ENCODE measurements at regions of chr17 and their contacts with region 1.

Region 1: GRCh38 chr17:67221062-67221998 is 23.7 kb downstream of the HELZ start:
- DNase-seq: peak; percentile 67
- ATAC-seq: peak; percentile 78
- H3K4me3 Mint-ChIP-seq: no peak overlapping the region
- H3K27ac Mint-ChIP-seq: no peak overlapping the region
- H3K4me1 Mint-ChIP-seq: peaks cover 12% of the 10 kb centered on the region
- H3K27me3 Mint-ChIP-seq: no peaks in the 10 kb centered on the region

Region 2: GRCh38 chr17:67157732-67158639 is 63.3 kb before region 1 on chr17:
- CTCF ChIA-PET with region 1: no interaction called
- POLR2A ChIA-PET with region 1: no interaction called
- DNase-seq: no peak
- ATAC-seq: peak; percentile 75
- H3K4me3 Mint-ChIP-seq: peak overlapping the region; percentile 34
- H3K27ac Mint-ChIP-seq: peak overlapping the region; percentile 85
- H3K4me1 Mint-ChIP-seq: peaks cover 25% of the 10 kb centered on the region
- H3K27me3 Mint-ChIP-seq: no peaks in the 10 kb centered on the region

Region 3: DNA sequence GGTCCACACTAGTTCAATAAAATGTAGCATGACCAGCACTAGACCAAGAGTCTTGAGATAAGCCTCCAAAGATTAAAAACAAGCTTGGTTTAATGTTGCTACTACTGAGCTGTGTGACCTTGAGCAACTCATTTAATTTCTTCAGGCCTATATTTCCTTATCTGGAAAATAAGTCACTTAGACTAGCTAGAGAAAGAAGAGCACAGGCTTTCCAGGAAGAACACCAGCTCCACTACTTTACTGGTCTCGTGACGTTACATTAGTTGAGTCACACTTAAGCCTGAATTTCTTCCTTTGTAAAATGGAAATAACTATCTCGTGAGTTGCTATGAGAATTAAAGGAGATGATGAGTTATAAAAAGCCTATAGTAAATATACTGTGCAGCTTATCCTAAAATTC is 18.3 kb after region 1 on chr17:
- CTCF ChIA-PET with region 1: interaction called, 23 read pairs
- POLR2A ChIA-PET with region 1: interaction called, 3 read pairs
- DNase-seq: no peak
- ATAC-seq: no peak
- H3K4me3 Mint-ChIP-seq: no peak overlapping the region
- H3K27ac Mint-ChIP-seq: no peak overlapping the region
- H3K4me1 Mint-ChIP-seq: peaks cover 38% of the 10 kb centered on the region
- H3K27me3 Mint-ChIP-seq: no peaks in the 10 kb centered on the region

Region 4: GRCh38 chr17:67258821-67259468 is 37.6 kb after region 1 on chr17:
- CTCF ChIA-PET with region 1: interaction called, 13 read pairs
- POLR2A ChIA-PET with region 1: no interaction called
- DNase-seq: peak; percentile 59
- ATAC-seq: peak; percentile 64
- H3K4me3 Mint-ChIP-seq: peak overlapping the region; percentile 42
- H3K27ac Mint-ChIP-seq: peak overlapping the region; percentile 76
- H3K4me1 Mint-ChIP-seq: peaks cover 41% of the 10 kb centered on the region
- H3K27me3 Mint-ChIP-seq: peaks cover 8% of the 10 kb centered on the region

Region 5: DNA sequence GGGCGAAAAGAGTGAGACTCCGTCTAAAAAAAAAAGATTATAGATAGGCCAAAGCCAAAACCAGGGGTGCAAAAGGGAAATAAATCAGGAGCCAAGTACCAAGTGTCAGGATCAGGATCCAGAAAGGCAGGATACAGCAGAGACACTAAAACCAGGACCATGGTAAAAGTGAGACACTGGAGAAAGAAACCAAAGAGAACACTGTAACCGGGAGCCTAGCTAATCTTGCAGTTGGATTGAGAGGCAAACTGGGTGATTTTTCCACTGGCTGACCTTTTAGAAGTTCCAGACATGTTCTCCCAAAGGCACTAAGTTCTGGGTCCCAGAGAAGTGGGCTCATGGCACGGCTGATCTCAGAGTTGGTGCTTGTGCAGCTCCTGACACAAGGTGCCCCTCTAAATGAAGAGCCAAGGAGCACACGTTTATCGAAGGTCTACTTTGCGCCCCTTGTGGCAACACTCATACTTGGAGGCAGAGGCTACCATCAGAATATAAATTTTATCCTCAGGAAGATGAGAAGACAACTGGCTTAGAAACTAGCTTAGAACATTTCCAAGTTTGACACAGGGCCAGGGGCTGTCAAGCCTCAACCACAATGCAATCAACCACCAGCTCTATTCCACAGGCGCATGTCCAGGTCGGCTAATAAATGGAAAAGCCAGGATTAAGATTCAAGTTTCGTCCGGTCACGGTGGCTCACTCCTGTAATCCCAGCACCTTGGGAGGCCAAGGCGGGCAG is 51.2 kb after region 1 on chr17:
- CTCF ChIA-PET with region 1: interaction called, 12 read pairs
- POLR2A ChIA-PET with region 1: no interaction called
- DNase-seq: peak; percentile 34
- ATAC-seq: peak; percentile 49
- H3K4me3 Mint-ChIP-seq: no peak overlapping the region
- H3K27ac Mint-ChIP-seq: no peak overlapping the region
- H3K4me1 Mint-ChIP-seq: no peaks in the 10 kb centered on the region
- H3K27me3 Mint-ChIP-seq: no peaks in the 10 kb centered on the region

Region 6: DNA sequence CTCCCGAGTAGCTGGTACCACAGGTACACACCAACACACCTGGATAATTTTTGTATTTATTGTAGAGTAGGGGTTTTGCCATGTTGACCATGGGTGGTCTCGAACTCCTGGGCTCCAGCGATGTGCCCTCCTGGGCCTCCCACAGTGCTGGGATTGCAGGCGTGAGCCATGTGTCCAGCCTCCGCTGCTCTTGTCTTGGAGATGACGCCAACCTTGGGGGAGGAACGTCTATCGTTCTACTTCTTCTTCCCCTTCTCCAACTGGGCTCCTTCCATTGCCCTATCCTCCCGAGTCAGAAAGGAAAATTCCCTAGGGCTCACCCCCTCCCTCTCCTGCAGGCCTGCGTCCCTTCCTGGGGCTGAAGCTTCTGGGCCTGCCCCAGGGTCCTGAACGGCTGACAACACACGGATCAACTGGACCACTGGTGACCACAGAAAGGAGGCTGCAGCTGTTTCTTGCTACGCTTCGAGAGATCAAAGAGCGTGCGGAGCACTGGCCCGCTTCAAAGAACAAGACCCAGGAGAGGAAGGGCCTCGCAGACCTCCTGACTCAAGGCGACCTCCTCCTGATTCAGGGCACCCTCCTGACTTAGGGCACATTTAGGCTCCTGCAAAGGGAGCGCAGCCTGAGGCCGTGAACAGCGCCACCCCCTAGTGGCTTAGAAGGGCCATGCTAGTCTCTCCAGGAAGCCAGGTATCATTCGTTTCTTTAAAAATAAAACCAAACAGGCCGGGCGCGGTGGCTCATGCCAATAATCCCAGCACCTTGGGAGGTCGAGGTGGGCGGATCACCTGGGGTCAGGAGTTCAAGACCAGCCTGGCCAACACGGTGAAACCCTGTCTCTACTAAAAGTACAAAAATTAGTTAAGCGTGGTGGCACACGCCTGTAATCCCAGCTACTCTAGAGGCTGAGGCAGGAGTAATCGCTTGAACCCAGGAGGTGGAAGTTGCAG is 72.2 kb after region 1 on chr17:
- CTCF ChIA-PET with region 1: interaction called, 94 read pairs
- POLR2A ChIA-PET with region 1: interaction called, 3 read pairs
- DNase-seq: peak; percentile 83
- ATAC-seq: peak; percentile 99
- H3K4me3 Mint-ChIP-seq: peak overlapping the region; percentile 12
- H3K27ac Mint-ChIP-seq: no peak overlapping the region
- H3K4me1 Mint-ChIP-seq: peaks cover 7% of the 10 kb centered on the region
- H3K27me3 Mint-ChIP-seq: no peaks in the 10 kb centered on the region